ENCODE measurements at regions of chr11 and their contacts with region 1.

Region 1: DNA sequence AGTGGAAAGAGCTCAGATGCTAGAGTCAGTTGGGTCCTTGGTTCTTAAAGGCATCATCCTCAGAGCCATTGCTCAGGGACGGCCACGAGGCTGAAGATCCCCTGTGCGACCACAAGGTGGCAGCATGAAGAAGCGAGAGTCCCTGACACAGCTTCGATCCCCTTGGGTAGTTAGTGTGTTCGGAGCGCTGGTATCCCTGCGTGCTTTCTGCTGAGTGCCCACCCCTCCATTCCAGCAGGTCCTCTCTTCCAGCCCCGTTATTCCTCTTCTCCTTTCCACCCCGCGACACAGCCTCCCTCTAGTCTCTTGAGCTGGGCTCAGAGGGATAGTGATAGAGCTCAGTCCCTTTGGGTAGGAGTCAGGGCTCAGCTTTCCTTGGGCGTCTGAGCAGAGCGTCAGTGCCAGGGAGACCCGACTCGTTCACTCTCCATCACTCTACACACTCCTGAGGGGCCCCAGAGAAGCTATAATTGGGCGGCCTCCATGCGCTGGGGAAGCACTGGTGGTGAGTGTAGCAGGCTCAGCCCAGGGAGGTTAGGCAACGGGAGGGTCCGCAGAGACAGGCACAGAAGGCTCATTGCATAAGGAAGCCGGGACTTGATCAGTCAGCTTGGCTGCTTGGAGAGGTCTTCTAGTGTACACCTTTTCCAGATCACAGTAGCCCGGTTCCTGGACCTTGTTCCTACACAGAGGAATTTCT is at the start of gene OR51D1:
- DNase-seq: peak; percentile 41
- ATAC-seq: peak; percentile 96
- H3K4me3 ChIP-seq: no peak within 1 kb of the TSS
- H3K27ac ChIP-seq: no peak within 1 kb of the TSS
- H3K4me1 ChIP-seq: no peaks in the 10 kb centered on the region
- H3K27me3 ChIP-seq: peaks cover 0 to 16% of the 10 kb centered on the region in 2 experiments; a peak in 4 of 5 replicates
- CTCF ChIP-seq: peak; percentile 90
- EP300 ChIP-seq: no peak
- POLR2A ChIP-seq: no peak
- RAD21 ChIP-seq: peak; percentile 45
- total RNA-seq, gene OR51D1: not detected in 2 replicates

Region 2: DNA sequence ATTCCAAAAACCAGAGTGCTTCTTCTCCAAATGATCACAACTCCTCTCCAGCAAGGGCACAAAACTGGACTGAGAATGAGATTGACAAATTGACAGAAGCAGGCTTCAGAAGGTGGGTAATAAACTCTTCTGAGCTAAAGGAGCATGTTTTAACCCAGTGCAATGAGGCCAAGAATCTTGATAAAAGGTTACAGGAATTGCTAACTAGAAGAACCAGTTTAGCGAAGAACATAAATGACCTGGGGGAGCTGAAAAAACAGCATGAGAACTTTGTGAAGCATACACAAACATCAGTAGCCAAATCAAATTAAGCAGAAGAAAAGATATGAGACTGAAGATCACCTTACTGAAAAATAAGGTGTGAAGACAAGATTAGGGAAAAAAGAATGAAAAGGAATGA is 76.6 kb before region 1 on chr11:
- CTCF ChIA-PET with region 1: no interaction called
- POLR2A ChIA-PET with region 1: no interaction called
- in situ Hi-C with region 1: no loop called
- intact Hi-C with region 1: no loop called
- DNase-seq: no peak
- ATAC-seq: no peak
- H3K4me3 ChIP-seq: no peak overlapping the region
- H3K27ac ChIP-seq: no peak overlapping the region
- H3K4me1 ChIP-seq: no peaks in the 10 kb centered on the region
- H3K27me3 ChIP-seq: no peaks in the 10 kb centered on the region
- CTCF ChIP-seq: no peak
- EP300 ChIP-seq: no peak
- POLR2A ChIP-seq: no peak
- RAD21 ChIP-seq: no peak

Region 3: GRCh38 chr11:5004424-5005274 is 367.5 kb after region 1 on chr11:
- CTCF ChIA-PET with region 1: interaction called, 13 read pairs
- POLR2A ChIA-PET with region 1: no interaction called
- in situ Hi-C with region 1: loop called (anchors 5 kb)
- intact Hi-C with region 1: loop called (anchors 1 kb)
- DNase-seq: peak; percentile 36
- ATAC-seq: no peak
- H3K4me3 ChIP-seq: no peak overlapping the region
- H3K27ac ChIP-seq: no peak overlapping the region
- H3K4me1 ChIP-seq: no peaks in the 10 kb centered on the region
- H3K27me3 ChIP-seq: no peaks in the 10 kb centered on the region
- CTCF ChIP-seq: peak; percentile 65
- EP300 ChIP-seq: no peak
- POLR2A ChIP-seq: no peak
- RAD21 ChIP-seq: no peak

Region 4: GRCh38 chr11:5043380-5043779 is 406.3 kb after region 1 on chr11:
- CTCF ChIA-PET with region 1: no interaction called
- POLR2A ChIA-PET with region 1: no interaction called
- in situ Hi-C with region 1: no loop called
- intact Hi-C with region 1: no loop called
- DNase-seq: no peak
- ATAC-seq: no peak
- H3K4me3 ChIP-seq: no peak overlapping the region
- H3K27ac ChIP-seq: no peak overlapping the region
- H3K4me1 ChIP-seq: no peaks in the 10 kb centered on the region
- H3K27me3 ChIP-seq: no peaks in the 10 kb centered on the region
- CTCF ChIP-seq: no peak
- EP300 ChIP-seq: no peak
- POLR2A ChIP-seq: no peak
- RAD21 ChIP-seq: no peak

Measured in HepG2 (cell line).